Naive thymus-derived CD8-positive, alpha-beta T cell (primary cell): ENCODE measurements at regions of chr16 and their contacts with region 1.

Region 1: DNA sequence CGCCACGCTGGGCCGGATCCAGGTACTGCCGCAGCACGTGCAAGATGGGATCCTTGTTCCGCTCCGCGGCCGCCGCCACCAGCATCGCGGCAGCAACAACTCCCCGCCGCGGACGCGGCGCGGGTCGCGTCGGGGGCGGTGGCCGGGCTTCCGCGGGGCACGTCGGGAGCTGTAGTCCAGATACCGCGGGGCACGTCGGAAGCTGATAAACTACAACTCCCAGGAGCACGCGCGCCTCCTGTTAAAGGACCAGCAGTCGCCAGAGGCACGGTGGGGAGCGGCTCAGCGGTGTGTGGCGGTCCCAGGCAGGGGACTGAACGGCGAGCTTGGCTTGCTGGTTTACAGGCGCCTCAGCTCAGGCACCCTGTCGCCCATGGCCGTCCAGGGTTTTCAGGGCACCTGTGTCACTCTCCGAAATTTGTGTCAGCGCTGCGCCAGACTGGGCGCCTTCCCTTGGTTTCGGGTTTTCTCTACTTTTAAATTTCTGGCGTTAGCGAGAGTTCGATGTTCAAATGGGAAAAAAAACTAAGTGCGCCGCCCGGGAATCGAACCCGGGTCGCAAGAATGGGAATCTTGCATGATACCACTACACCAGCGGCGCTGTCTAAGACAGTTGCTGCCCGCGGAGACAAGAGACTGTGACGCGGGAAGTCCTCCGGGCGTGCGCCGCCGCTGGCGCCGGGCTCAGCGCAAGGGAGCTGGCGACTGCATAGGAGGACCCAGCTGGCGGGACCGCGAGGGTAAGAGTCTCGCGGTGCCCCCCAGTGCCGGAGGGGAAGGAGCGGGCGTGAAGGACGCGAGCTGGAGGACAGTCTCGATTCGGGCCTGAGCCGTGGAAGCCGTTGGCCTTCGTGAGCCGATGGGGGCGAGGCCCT is at the start of gene METTL26:
- DNase-seq: peak; percentile 86 to 99 (median 92)
- ATAC-seq: peak; percentile 85 to 86
- H3K4me3 Mint-ChIP-seq: peak within 1 kb of the TSS; percentile 94 to 99 (median 98)
- H3K27ac Mint-ChIP-seq: peak within 1 kb of the TSS; percentile 95 to 100 (median 98)
- H3K4me1 Mint-ChIP-seq: peaks cover 3 to 18% (median 7%) of the 10 kb centered on the region in 4 donors
- H3K27me3 Mint-ChIP-seq: peaks cover 0 to 4% (median 0%) of the 10 kb centered on the region in 5 donors
- polyA plus RNA-seq, gene METTL26: 88.4 to 98.4 (median 89.8) TPM

Region 2: GRCh38 chr16:401468-402348 is 234.7 kb before region 1 on chr16 and contains the start of gene DECR2:
- POLR2A ChIA-PET with region 1: interaction called, 13 read pairs
- DNase-seq: peak; percentile 90 to 100 (median 96)
- ATAC-seq: peak; percentile 78
- H3K4me3 Mint-ChIP-seq: peak within 1 kb of the TSS; percentile 85 to 95 (median 90)
- H3K27ac Mint-ChIP-seq: peak within 1 kb of the TSS; percentile 68 to 98 (median 96)
- H3K4me1 Mint-ChIP-seq: peaks cover 6 to 21% (median 17%) of the 10 kb centered on the region in 4 donors
- H3K27me3 Mint-ChIP-seq: no peaks in the 10 kb centered on the region
- polyA plus RNA-seq, gene DECR2: 7.4 to 12.2 (median 8.5) TPM

Region 3: DNA sequence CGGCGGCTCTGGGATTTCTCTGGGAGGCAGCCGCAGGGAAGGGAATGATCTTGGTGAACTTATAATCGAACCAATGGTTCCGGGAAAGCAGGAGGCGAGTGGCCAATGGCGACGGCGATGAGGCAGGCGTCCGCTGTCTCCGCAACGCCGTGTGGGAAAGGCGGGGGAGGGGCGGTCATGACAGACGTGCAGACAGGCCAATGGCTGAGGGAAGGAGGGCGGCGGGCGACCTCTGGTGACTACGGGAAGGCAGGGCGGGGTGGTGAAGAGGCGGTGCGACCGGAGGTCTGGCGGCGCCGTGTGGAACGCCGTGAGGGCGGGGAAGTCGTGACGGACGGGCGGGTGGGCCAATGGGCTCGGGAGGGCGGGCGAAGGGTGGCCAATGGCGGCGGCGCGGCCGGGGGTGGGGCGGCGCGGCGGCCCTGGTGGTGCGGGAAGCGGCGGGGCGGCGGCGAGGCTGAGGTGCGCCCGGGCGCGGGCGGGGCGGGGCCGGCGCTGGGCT is 46.7 kb before region 1 on chr16 and contains the start of gene RAB40C:
- POLR2A ChIA-PET with region 1: interaction called, 11 read pairs
- DNase-seq: peak; percentile 98 to 100 (median 99)
- ATAC-seq: peak; percentile 83 to 84
- H3K4me3 Mint-ChIP-seq: peak within 1 kb of the TSS; percentile 95 to 100 (median 99)
- H3K27ac Mint-ChIP-seq: peak within 1 kb of the TSS; percentile 98 to 100 (median 98)
- H3K4me1 Mint-ChIP-seq: peaks cover 24 to 46% (median 45%) of the 10 kb centered on the region in 4 donors
- H3K27me3 Mint-ChIP-seq: no peaks in the 10 kb centered on the region
- polyA plus RNA-seq, gene RAB40C: 5.8 to 14.6 (median 6.2) TPM

Region 4: GRCh38 chr16:648781-649589 is 12.5 kb after region 1 on chr16 and contains the start of gene WDR90:
- POLR2A ChIA-PET with region 1: interaction called, 25 read pairs
- DNase-seq: peak; percentile 88 to 95 (median 90)
- ATAC-seq: peak; percentile 91 to 98
- H3K4me3 Mint-ChIP-seq: peak within 1 kb of the TSS; percentile 68 to 85 (median 75)
- H3K27ac Mint-ChIP-seq: peak within 1 kb of the TSS in 8 of 10 donors; percentile 10 to 93 (median 84)
- H3K4me1 Mint-ChIP-seq: peaks cover 8 to 29% (median 15%) of the 10 kb centered on the region in 4 donors
- H3K27me3 Mint-ChIP-seq: no peaks in the 10 kb centered on the region
- polyA plus RNA-seq, gene WDR90: 0.27 to 2.5 (median 1.5) TPM

Region 5: DNA sequence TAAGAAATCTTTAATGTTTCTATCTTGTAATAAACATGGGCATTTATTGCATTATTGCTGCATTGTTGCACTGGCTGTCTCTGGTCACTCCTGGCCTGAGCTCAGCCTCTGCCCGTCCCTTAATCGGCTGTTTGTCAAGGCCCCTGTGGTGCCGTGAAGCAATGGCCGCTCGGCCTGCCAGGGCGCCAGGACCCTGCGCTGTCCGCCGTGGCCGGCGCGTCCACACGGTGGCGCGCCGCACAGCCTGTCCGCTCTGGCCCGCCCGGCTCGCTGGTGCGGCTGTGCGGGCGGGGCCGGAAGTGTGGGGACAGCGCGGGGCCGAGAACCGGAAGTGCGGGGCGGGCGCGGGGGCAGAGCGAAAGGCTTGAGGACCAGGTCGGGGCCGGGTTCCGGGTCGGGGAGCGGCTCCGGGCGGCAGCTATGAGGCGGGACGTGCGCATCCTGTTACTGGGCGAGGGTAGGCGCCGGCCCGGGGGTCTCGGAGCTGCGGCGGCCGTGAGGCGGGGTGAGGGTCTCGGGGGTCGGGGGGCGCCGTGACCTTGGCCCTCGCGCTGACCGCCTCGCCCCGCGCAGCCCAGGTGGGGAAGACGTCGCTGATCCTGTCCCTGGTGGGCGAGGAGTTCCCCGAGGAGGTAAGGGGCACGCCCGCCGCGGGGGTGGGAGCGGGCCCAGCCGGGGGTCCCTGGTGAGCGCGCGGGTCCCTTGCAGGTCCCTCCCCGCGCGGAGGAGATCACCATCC is 31.5 kb after region 1 on chr16 and contains the start of gene RHOT2:
- POLR2A ChIA-PET with region 1: interaction called, 16 read pairs
- DNase-seq: peak; percentile 79 to 92 (median 86)
- ATAC-seq: peak; percentile 88 to 94
- H3K4me3 Mint-ChIP-seq: peak within 1 kb of the TSS; percentile 65 to 87 (median 80)
- H3K27ac Mint-ChIP-seq: peak within 1 kb of the TSS in 9 of 10 donors; percentile 79 to 96 (median 87)
- H3K4me1 Mint-ChIP-seq: peaks cover 0 to 17% (median 11%) of the 10 kb centered on the region in 4 donors
- H3K27me3 Mint-ChIP-seq: no peaks in the 10 kb centered on the region
- polyA plus RNA-seq, gene RHOT2: 25.1 to 44.8 (median 31.8) TPM

Region 6: DNA sequence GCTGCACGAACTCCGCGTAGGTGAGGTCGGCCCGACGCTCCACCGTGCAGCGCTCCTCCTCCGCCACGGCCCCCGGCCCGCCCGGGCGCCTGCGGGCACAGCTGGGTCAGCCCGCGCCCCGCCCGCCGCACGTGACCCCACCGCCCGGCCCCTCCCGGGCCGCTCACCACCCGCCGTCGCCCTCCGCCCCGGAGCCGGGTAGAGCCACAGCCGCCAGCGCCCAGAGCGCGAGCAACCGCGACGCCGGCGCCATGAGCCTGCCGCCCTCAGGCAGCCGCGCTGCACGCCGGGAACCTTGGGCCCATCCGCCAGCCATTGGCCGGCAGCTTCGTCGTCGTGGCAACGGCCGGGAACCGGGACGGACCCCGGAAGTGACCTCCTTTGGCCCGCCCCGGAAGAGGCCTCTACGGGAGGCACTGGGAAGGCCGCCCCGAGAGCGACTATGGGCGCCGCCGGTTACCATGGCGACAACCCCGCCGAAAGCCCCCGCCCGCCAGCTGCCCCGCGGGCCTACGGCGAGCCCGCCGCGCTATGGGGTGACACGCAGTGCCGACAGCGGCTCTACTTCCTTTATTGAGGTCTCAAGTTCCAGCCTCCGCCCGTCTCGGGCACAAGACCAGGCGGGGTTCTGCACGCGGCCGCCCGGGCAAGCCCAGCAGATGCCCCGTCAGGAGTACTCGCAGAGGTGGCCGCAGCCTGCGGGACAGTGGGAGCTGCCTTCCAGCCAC is 47.8 kb after region 1 on chr16 and contains the start of gene JMJD8:
- POLR2A ChIA-PET with region 1: interaction called, 29 read pairs
- DNase-seq: peak; percentile 91 to 98 (median 92)
- ATAC-seq: peak; percentile 67 to 74
- H3K4me3 Mint-ChIP-seq: peak within 1 kb of the TSS; percentile 60 to 86 (median 76)
- H3K27ac Mint-ChIP-seq: peak within 1 kb of the TSS in 8 of 10 donors; percentile 52 to 93 (median 80)
- H3K4me1 Mint-ChIP-seq: peaks cover 5 to 46% (median 34%) of the 10 kb centered on the region in 4 donors
- H3K27me3 Mint-ChIP-seq: no peaks in the 10 kb centered on the region
- polyA plus RNA-seq, gene JMJD8: 31.7 to 62.8 (median 46.0) TPM

Region 7: DNA sequence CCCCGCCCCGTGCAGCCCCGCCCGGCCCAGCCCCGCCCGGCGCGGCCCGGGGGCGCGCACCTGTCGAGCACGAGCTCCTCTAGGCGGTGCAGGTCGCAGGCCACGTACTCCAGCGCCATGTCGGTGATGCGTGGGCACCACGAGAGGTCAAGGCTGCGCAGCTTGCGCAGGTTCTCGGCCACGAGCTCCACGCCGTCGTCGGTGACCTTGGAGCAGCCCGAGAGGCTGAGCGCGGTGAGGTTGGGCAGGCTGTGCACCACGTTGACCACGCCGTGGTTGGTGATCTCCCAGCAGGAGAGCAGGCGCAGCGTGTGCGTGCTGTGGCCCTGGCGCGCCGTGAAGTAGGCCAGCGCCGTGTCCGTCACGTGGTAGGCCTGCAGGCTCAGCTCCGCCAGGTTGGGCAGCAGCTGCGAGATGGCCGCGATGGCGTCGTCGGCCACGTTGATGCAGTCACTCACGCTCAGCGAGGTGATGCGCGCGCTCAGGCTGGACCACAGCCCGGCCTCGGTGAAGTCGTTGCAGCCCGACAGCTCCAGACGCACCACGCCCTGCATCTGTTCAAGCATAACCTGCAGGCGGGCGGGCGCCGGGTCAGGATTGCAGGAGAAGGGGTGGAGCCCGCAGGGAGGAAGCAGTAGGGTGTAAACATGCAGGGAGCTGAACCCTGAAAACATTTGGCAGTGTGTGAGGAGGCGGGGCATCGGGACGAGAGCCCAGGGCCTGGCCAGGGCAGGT is 59.1 kb after region 1 on chr16:
- POLR2A ChIA-PET with region 1: interaction called, 14 read pairs
- DNase-seq: peak; percentile 43 to 83 (median 63)
- ATAC-seq: peak; percentile 67 to 71
- H3K4me3 Mint-ChIP-seq: peak overlapping the region; percentile 77 to 86 (median 82)
- H3K27ac Mint-ChIP-seq: peak overlapping the region in 7 of 10 donors; percentile 42 to 85 (median 77)
- H3K4me1 Mint-ChIP-seq: peaks cover 9 to 46% (median 22%) of the 10 kb centered on the region in 4 donors
- H3K27me3 Mint-ChIP-seq: peaks cover 0 to 2% (median 0%) of the 10 kb centered on the region in 5 donors

Region 8: DNA sequence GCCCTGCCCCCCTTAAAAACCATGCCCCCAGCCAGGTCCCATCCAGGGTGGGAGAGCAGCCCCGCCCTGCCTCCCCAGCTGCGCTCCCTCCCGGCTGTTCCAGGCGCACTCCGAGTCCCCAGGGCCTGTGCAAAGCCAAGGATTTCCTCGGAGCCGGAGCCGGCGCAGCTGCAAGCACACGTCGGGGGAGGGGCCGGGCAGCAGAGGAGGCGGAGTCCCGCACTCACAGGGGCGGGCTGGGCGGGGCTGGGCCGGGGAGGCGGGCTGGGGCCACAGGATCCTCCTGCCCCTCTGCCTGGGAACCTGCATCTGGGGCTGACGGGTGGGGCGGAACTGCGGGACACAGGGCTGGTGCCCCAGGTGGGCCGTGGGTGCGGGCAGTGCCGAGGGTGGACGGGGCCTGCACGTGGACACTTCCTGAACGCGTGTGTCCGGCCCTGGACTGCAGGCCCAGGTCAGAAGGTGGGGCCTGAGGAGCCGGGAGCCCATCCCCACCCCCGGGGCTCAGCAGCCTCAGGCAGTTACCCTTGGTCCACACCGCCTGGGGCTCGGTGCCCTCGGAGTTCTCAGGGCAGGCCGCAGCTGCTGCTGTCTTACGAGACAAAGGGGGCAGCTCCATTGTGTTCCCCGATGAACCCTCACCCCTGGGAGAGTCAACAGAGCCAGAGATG is 412.1 kb after region 1 on chr16:
- POLR2A ChIA-PET with region 1: no interaction called
- DNase-seq: peak in 1 of 10 donors; percentile 22
- ATAC-seq: peak; percentile 50 to 57
- H3K4me3 Mint-ChIP-seq: no peak overlapping the region
- H3K27ac Mint-ChIP-seq: no peak overlapping the region
- H3K4me1 Mint-ChIP-seq: no peaks in the 10 kb centered on the region
- H3K27me3 Mint-ChIP-seq: peaks cover 0 to 4% (median 0%) of the 10 kb centered on the region in 5 donors